Activated CD8-positive, alpha-beta T cell treated with anti-CD3 and anti-CD28 coated beads, Interleukin-2, amount 10 ng/mL, durations not matched to agents 7 days and 5 days (primary cell): ENCODE measurements at regions of chr9 and their contacts with region 1.

Region 1: GRCh38 chr9:73132034-73132776 is 19.5 kb upstream of the ANXA1 start:
- DNase-seq: peak; percentile 84
- ATAC-seq: peak; percentile 95
- H3K4me3 Mint-ChIP-seq: peak overlapping the region; percentile 79
- H3K27ac Mint-ChIP-seq: peak overlapping the region; percentile 93
- H3K4me1 Mint-ChIP-seq: peaks cover 34% of the 10 kb centered on the region
- H3K27me3 Mint-ChIP-seq: no peaks in the 10 kb centered on the region

Region 2: DNA sequence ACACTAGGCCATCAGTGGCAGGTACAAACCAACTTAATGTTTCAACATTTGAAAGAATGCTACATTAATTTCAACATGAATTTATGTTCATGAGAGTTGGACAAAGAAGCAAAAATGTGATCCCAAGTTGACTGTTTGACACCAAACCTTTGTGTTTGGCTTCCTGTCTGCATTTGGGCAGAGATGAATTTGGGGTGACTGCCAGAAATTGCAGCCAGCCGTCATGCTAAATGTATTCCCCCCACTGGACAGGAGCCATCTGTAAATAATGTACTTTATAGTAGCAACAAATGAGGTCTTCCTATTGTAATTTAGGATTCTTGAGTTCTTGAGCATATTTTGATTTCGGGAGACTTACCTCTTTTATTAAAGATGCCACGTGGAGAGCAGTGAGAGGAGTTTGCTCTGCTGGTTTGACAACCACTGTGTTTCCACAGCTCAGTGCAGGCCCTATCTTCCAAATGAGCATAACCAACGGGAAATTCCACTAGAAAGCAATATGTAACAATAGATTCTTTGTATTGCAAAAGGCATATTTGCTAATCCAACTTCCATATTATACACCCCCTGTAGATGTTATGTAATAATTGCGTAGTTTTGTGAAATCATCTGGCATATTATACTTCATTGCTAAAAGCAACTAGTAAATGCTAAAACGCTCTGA is 206.9 kb before region 1 on chr9:
- CTCF ChIA-PET with region 1: no interaction called
- POLR2A ChIA-PET with region 1: no interaction called
- DNase-seq: no peak
- ATAC-seq: no peak
- H3K4me3 Mint-ChIP-seq: no peak overlapping the region
- H3K27ac Mint-ChIP-seq: no peak overlapping the region
- H3K4me1 Mint-ChIP-seq: no peaks in the 10 kb centered on the region
- H3K27me3 Mint-ChIP-seq: no peaks in the 10 kb centered on the region

Region 3: GRCh38 chr9:73116031-73116430 is 16.2 kb before region 1 on chr9:
- CTCF ChIA-PET with region 1: interaction called, 10 read pairs
- POLR2A ChIA-PET with region 1: no interaction called
- DNase-seq: no peak
- ATAC-seq: no peak
- H3K4me3 Mint-ChIP-seq: no peak overlapping the region
- H3K27ac Mint-ChIP-seq: no peak overlapping the region
- H3K4me1 Mint-ChIP-seq: peaks cover 31% of the 10 kb centered on the region
- H3K27me3 Mint-ChIP-seq: no peaks in the 10 kb centered on the region

Region 4: GRCh38 chr9:73151653-73152542 is 19.7 kb after region 1 on chr9 and contains the start of gene ANXA1:
- CTCF ChIA-PET with region 1: interaction called, 14 read pairs
- POLR2A ChIA-PET with region 1: interaction called, 11 read pairs
- DNase-seq: no peak
- ATAC-seq: peak; percentile 59
- H3K4me3 Mint-ChIP-seq: peak within 1 kb of the TSS; percentile 88
- H3K27ac Mint-ChIP-seq: peak within 1 kb of the TSS; percentile 86
- H3K4me1 Mint-ChIP-seq: peaks cover 76% of the 10 kb centered on the region
- H3K27me3 Mint-ChIP-seq: no peaks in the 10 kb centered on the region
- total RNA-seq, gene ANXA1: 88.2 to 90.8 TPM

Region 5: GRCh38 chr9:73269430-73270101 is 137.4 kb after region 1 on chr9:
- CTCF ChIA-PET with region 1: no interaction called
- POLR2A ChIA-PET with region 1: no interaction called
- DNase-seq: no peak
- ATAC-seq: no peak
- H3K4me3 Mint-ChIP-seq: no peak overlapping the region
- H3K27ac Mint-ChIP-seq: no peak overlapping the region
- H3K4me1 Mint-ChIP-seq: no peaks in the 10 kb centered on the region
- H3K27me3 Mint-ChIP-seq: no peaks in the 10 kb centered on the region